Activated CD4-positive, alpha-beta T cell treated with anti-CD3 and anti-CD28 coated beads, Interleukin-2, amount 10 ng/mL, durations not matched to agents 24 days and 14 days (primary cell): ENCODE measurements at regions of chr12 and their contacts with region 1.

Region 1: DNA sequence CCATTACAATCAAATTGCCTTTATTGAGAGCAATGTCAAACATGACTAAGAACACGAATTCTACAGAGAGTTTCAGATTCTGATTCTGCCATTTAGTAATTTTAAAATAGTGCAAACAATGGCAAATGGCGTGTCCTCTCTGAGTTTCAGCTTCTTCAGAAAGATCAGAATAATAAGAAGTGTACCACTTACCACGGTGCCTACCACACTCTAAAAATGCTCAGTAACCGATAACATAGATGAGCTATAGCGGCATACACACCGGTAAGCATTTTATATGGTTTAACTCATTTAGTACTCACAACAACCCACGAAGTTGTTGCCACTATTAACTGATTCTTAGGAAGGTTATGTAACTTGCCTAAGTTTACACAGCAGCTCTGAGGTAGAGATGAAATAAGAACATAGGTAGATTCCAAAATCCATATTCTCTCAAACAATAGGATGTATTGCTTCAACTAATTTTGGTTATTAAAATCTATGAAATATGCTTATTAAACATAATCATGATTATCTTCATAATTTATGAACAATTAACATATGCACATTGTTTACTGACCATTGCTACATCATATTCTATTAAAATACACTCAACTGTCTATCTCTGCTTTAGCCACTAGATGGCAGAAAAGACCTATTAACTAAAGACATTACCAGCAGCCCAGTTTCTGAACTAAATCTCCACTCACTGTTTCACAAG is 38.3 kb downstream of the SLC6A15 start:
- DNase-seq: no peak
- H3K4me3 Mint-ChIP-seq: no peak overlapping the region
- H3K27ac Mint-ChIP-seq: no peak overlapping the region
- H3K4me1 Mint-ChIP-seq: no peaks in the 10 kb centered on the region
- H3K27me3 Mint-ChIP-seq: no peaks in the 10 kb centered on the region

Region 2: GRCh38 chr12:84745127-84745526 is 129.1 kb before region 1 on chr12:
- intact Hi-C with region 1: no loop called
- DNase-seq: no peak
- H3K4me3 Mint-ChIP-seq: no peak overlapping the region
- H3K27ac Mint-ChIP-seq: no peak overlapping the region
- H3K4me1 Mint-ChIP-seq: no peaks in the 10 kb centered on the region
- H3K27me3 Mint-ChIP-seq: no peaks in the 10 kb centered on the region

Region 3: GRCh38 chr12:84937415-84937814 is 63.1 kb after region 1 on chr12:
- intact Hi-C with region 1: no loop called
- DNase-seq: no peak
- H3K4me3 Mint-ChIP-seq: no peak overlapping the region
- H3K27ac Mint-ChIP-seq: no peak overlapping the region
- H3K4me1 Mint-ChIP-seq: no peaks in the 10 kb centered on the region
- H3K27me3 Mint-ChIP-seq: no peaks in the 10 kb centered on the region

Region 4: GRCh38 chr12:85029456-85029855 is 155.2 kb after region 1 on chr12:
- intact Hi-C with region 1: loop called (anchors 1 kb)
- DNase-seq: no peak
- H3K4me3 Mint-ChIP-seq: no peak overlapping the region
- H3K27ac Mint-ChIP-seq: no peak overlapping the region
- H3K4me1 Mint-ChIP-seq: no peaks in the 10 kb centered on the region
- H3K27me3 Mint-ChIP-seq: no peaks in the 10 kb centered on the region

Region 5: DNA sequence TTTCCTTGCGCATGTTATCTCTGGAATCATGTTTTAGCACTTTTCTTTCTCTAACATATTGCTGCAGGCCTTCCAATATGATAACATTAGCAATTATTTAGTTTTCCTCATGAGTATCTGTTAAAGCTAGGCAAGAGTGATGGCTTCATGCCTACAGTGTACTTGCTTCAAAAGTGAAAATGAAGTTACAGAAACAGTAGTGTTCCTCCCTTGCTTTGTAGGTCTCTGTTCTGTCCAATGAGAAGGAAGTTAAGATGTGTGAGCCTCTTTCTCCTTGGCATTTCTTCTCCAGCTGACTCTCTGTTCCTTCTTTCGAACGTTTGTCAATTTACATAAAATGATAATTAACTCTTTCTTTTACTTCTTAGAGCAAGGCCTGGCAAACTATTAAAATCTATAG is 184.1 kb after region 1 on chr12:
- intact Hi-C with region 1: loop called (anchors 1 kb)
- DNase-seq: no peak
- H3K4me3 Mint-ChIP-seq: no peak overlapping the region
- H3K27ac Mint-ChIP-seq: no peak overlapping the region
- H3K4me1 Mint-ChIP-seq: no peaks in the 10 kb centered on the region
- H3K27me3 Mint-ChIP-seq: no peaks in the 10 kb centered on the region

Region 6: GRCh38 chr12:85920324-85920947 is 1046.2 kb after region 1 on chr12:
- intact Hi-C with region 1: loop called (anchors 10 kb)
- DNase-seq: no peak
- H3K4me3 Mint-ChIP-seq: no peak overlapping the region
- H3K27ac Mint-ChIP-seq: no peak overlapping the region
- H3K4me1 Mint-ChIP-seq: no peaks in the 10 kb centered on the region
- H3K27me3 Mint-ChIP-seq: no peaks in the 10 kb centered on the region